ENCODE measurements at regions of chr1 and their contacts with region 1.

Region 1: DNA sequence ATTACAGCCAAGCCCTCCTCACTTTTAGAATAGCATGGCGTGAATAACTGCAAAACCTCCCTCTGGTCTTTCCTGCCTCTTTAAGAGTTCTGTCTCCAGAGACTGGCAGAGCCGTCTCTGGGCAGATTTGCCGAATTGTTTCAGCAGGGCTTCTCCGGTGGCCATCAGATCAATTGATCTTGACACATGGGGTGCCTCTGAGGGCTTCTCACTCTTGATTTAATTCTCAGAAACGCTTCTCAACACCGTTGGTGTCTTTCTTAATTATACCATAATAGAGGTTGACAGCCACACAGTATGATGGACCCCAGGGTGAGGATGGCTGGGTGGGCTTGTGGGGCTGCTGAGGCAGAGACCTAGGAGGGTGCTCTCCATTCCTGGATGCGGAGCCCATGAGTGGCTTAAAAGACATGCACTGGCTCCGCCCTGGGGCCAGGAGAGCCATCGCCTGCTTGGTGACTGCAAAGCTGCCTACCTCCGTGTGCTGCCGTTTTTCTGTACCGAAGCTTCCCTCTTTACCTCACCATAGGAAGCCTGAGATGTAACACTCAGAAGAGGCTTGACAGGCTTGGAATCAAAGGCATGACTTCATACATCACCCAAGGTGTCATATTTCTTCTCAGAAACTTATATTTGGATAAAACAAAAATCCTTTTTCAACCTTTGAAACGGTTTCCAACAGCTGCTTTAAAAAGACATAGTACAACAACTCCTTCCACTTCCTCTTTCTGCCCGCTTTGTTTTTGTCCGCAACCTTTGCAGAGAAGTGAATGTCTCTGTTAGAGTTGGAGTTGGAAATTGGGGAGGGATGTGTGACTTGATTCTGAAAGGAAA is 82.9 kb downstream of the GALNT2 start:
- DNase-seq: peak; percentile 78
- ATAC-seq: peak; percentile 77
- H3K4me3 ChIP-seq: peak overlapping the region; percentile 8 to 64 (median 51)
- H3K4me3 Mint-ChIP-seq: peak overlapping the region; percentile 73
- H3K27ac ChIP-seq: peak overlapping the region; percentile 76 to 94
- H3K27ac Mint-ChIP-seq: peak overlapping the region; percentile 98
- H3K4me1 ChIP-seq: peaks cover 61 to 63% of the 10 kb centered on the region in 2 donors
- H3K4me1 Mint-ChIP-seq: peaks cover 71% of the 10 kb centered on the region
- H3K27me3 ChIP-seq: no peaks in the 10 kb centered on the region
- H3K27me3 Mint-ChIP-seq: no peaks in the 10 kb centered on the region
- CTCF ChIP-seq: no peak

Region 2: GRCh38 chr1:229704157-229704556 is 445.8 kb before region 1 on chr1:
- CTCF ChIA-PET with region 1: no interaction called
- POLR2A ChIA-PET with region 1: interaction called, 11 read pairs
- intact Hi-C with region 1: no loop called
- DNase-seq: no peak
- ATAC-seq: no peak
- H3K4me3 ChIP-seq: no peak overlapping the region
- H3K4me3 Mint-ChIP-seq: no peak overlapping the region
- H3K27ac ChIP-seq: no peak overlapping the region
- H3K27ac Mint-ChIP-seq: no peak overlapping the region
- H3K4me1 ChIP-seq: peaks cover 4% of the 10 kb centered on the region in 2 donors
- H3K4me1 Mint-ChIP-seq: peaks cover 4% of the 10 kb centered on the region
- H3K27me3 ChIP-seq: no peaks in the 10 kb centered on the region
- H3K27me3 Mint-ChIP-seq: peaks cover 22% of the 10 kb centered on the region
- CTCF ChIP-seq: no peak

Region 3: GRCh38 chr1:230495891-230496385 is 346.0 kb after region 1 on chr1:
- CTCF ChIA-PET with region 1: no interaction called
- POLR2A ChIA-PET with region 1: no interaction called
- intact Hi-C with region 1: no loop called
- DNase-seq: no peak
- ATAC-seq: no peak
- H3K4me3 ChIP-seq: no peak overlapping the region
- H3K4me3 Mint-ChIP-seq: no peak overlapping the region
- H3K27ac ChIP-seq: no peak overlapping the region
- H3K27ac Mint-ChIP-seq: no peak overlapping the region
- H3K4me1 ChIP-seq: no peaks in the 10 kb centered on the region
- H3K4me1 Mint-ChIP-seq: no peaks in the 10 kb centered on the region
- H3K27me3 ChIP-seq: peaks cover 0 to 4% (median 2%) of the 10 kb centered on the region in 4 experiments
- H3K27me3 Mint-ChIP-seq: peaks cover 31% of the 10 kb centered on the region
- CTCF ChIP-seq: no peak

Measured in B cell (primary cell).